Ascending aorta (tissue), 2 donors: ENCODE measurements at regions of chr1 and their contacts with region 1.

Region 1: GRCh38 chr1:69121723-69122122 is 446.0 kb upstream of the LRRC7 start:
- DNase-seq: no peak
- H3K4me3 ChIP-seq: no peak overlapping the region
- H3K27ac ChIP-seq: peak overlapping the region; percentile 31 to 55
- H3K4me1 ChIP-seq: peaks cover 0 to 13% of the 10 kb centered on the region in 2 donors
- H3K27me3 ChIP-seq: no peaks in the 10 kb centered on the region
- CTCF ChIP-seq: no peak

Region 2: DNA sequence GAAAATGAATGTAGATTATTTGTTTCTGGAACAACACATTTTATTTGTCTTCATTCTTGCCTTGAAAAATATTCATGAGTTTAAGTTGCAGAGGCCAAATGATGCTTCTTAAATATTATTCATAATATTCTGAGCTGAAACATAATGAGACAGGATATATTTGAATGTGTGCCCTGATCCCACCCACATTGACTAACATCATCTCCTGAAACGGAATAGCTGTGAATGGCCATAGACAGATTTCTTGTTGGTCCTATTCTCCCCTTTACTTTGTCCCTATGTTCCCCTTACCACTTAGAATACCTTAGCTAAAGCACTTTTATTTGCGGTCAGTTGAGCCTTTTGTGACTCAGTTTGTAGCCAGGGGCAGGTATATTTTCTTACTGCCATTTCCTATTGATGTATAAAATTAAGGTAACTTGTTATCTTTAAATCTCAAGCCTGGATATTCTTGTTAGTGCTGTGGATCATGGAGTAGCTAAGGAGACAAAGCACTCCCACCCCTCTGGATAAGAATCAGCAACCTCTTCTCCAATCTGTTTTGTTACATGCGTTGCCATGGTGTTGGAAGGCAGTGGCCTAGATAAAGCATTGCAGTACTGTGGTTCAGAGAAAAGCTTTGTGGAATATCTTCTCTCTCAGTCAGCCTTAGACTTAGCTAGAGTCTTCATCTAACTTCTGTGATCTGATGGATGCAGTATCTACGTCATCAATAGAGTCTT is 146.3 kb before region 1 on chr1:
- intact Hi-C with region 1: loop called (anchors 10 kb)
- DNase-seq: no peak
- H3K4me3 ChIP-seq: no peak overlapping the region
- H3K27ac ChIP-seq: peak overlapping the region in 1 of 2 donors; percentile 50
- H3K4me1 ChIP-seq: peaks cover 0 to 3% of the 10 kb centered on the region in 2 donors
- H3K27me3 ChIP-seq: no peaks in the 10 kb centered on the region
- CTCF ChIP-seq: no peak